ENCODE measurements at regions of chr4 and their contacts with region 1.

Region 1: DNA sequence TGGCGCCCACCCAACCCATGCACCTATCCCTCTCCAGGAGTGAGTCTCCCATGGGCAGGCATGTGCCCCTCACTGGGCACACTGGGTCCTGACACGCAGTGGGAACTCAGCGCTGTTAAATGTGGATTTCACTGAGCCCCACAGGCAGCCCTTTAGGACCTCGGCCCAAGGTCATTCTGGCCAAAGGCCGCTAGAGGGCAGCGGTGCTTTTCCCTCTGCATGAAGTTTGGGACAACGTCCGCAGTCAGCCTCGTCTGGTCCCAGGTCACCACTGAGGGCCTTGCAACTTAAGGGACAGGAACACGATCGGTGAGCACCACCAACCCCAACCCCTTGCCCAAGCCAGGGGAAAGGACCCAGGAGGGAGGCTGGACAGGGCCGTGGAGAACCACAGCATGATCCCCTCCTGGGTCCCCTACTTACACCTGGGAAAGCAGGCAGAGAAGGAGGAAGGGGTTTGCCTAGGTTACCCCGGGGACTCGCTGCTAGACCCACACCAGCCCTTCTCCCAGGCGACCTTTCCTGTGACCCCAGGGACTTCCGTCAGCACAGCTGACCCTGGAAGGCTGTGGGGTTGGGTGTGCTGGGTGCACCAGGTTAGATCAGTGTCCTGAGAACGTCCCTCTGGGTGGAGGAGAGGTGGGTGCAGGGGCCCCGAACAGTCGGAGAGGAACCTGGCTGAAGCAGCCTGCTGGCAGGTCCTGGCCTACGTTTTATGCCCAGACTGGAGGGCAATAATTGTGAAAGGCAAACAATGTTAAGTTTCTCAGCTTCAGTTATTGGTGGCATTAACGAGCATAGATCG is 24.0 kb downstream of the CYTL1 start:
- DNase-seq: peak; percentile 54
- ATAC-seq: peak; percentile 96
- H3K4me3 ChIP-seq: no peak overlapping the region
- H3K27ac ChIP-seq: no peak overlapping the region
- H3K4me1 ChIP-seq: no peaks in the 10 kb centered on the region
- H3K27me3 ChIP-seq: peaks cover 2 to 5% of the 10 kb centered on the region in 2 experiments; a peak in 3 of 5 replicates
- CTCF ChIP-seq: peak; percentile 94
- EP300 ChIP-seq: no peak
- POLR2A ChIP-seq: no peak
- RAD21 ChIP-seq: peak; percentile 78

Region 2: GRCh38 chr4:4981427-4981826 is 13.9 kb before region 1 on chr4:
- CTCF ChIA-PET with region 1: no interaction called
- POLR2A ChIA-PET with region 1: no interaction called
- in situ Hi-C with region 1: no loop called
- intact Hi-C with region 1: no loop called
- DNase-seq: no peak
- ATAC-seq: no peak
- H3K4me3 ChIP-seq: no peak overlapping the region
- H3K27ac ChIP-seq: no peak overlapping the region
- H3K4me1 ChIP-seq: no peaks in the 10 kb centered on the region
- H3K27me3 ChIP-seq: peaks cover 0 to 3% of the 10 kb centered on the region in 2 experiments; a peak in 2 of 5 replicates
- CTCF ChIP-seq: no peak
- EP300 ChIP-seq: no peak
- POLR2A ChIP-seq: no peak
- RAD21 ChIP-seq: no peak

Region 3: GRCh38 chr4:5142726-5143125 is 147.4 kb after region 1 on chr4:
- CTCF ChIA-PET with region 1: interaction called, 10 read pairs
- POLR2A ChIA-PET with region 1: no interaction called
- in situ Hi-C with region 1: no loop called
- intact Hi-C with region 1: loop called (anchors 1 kb)
- DNase-seq: peak; percentile 20
- ATAC-seq: no peak
- H3K4me3 ChIP-seq: no peak overlapping the region
- H3K27ac ChIP-seq: no peak overlapping the region
- H3K4me1 ChIP-seq: no peaks in the 10 kb centered on the region
- H3K27me3 ChIP-seq: peaks cover 0 to 1% of the 10 kb centered on the region in 2 experiments; a peak in 1 of 5 replicates
- CTCF ChIP-seq: peak; percentile 28; the same call in 1 of the 2 replicates
- EP300 ChIP-seq: no peak
- POLR2A ChIP-seq: no peak
- RAD21 ChIP-seq: no peak

Region 4: GRCh38 chr4:5812506-5813229 is 817.4 kb after region 1 on chr4:
- CTCF ChIA-PET with region 1: interaction called, 8 read pairs
- POLR2A ChIA-PET with region 1: no interaction called
- in situ Hi-C with region 1: loop called (anchors 25 kb)
- intact Hi-C with region 1: no loop called
- DNase-seq: peak; percentile 58
- ATAC-seq: peak; percentile 86
- H3K4me3 ChIP-seq: no peak overlapping the region
- H3K27ac ChIP-seq: no peak overlapping the region
- H3K4me1 ChIP-seq: no peaks in the 10 kb centered on the region
- H3K27me3 ChIP-seq: no peaks in the 10 kb centered on the region; a peak in 1 of 5 replicates
- CTCF ChIP-seq: peak; percentile 72
- EP300 ChIP-seq: no peak
- POLR2A ChIP-seq: no peak
- RAD21 ChIP-seq: peak; percentile 45